ENCODE measurements at regions of chr2 and their contacts with region 1.

Region 1: DNA sequence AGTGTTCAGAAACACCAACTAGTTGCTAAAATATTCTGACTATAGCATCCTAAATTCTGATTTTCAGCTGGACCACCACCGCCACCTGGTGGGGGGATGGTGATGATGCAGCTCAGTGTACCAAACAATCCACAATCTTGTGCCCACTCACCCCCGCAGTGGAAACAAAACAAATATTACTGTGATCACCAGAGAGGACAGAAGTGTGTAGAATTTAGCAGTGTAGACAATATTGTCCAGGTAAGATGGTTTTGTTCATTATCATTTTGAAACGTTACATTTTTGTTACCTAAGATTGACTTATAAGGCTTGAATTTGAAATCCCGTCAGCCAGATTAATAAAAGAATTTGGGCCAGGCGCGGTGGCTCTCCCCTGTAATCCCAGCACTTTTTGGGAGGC is 31.7 kb upstream of the UBXN4 start:
- DNase-seq: peak; percentile 49 to 87 (median 70)
- ATAC-seq: peak; percentile 86
- H3K4me3 ChIP-seq: no peak overlapping the region
- H3K4me3 Mint-ChIP-seq: no peak overlapping the region
- H3K27ac ChIP-seq: no peak overlapping the region
- H3K27ac Mint-ChIP-seq: no peak overlapping the region
- H3K4me1 ChIP-seq: no peaks in the 10 kb centered on the region
- H3K4me1 Mint-ChIP-seq: peaks cover 2% of the 10 kb centered on the region
- H3K27me3 ChIP-seq: no peaks in the 10 kb centered on the region
- H3K27me3 Mint-ChIP-seq: no peaks in the 10 kb centered on the region
- CTCF ChIP-seq: peak; percentile 98

Region 2: GRCh38 chr2:134988994-134989605 is 720.9 kb before region 1 on chr2:
- CTCF ChIA-PET with region 1: interaction called, 18 read pairs
- POLR2A ChIA-PET with region 1: no interaction called
- intact Hi-C with region 1: loop called (anchors 1 kb)
- DNase-seq: peak in 2 of 9 experiments; percentile 33 to 49
- ATAC-seq: peak; percentile 40
- H3K4me3 ChIP-seq: no peak overlapping the region
- H3K4me3 Mint-ChIP-seq: no peak overlapping the region
- H3K27ac ChIP-seq: no peak overlapping the region
- H3K27ac Mint-ChIP-seq: no peak overlapping the region
- H3K4me1 ChIP-seq: no peaks in the 10 kb centered on the region
- H3K4me1 Mint-ChIP-seq: peaks cover 3% of the 10 kb centered on the region
- H3K27me3 ChIP-seq: peaks cover 0 to 2% of the 10 kb centered on the region in 2 experiments
- H3K27me3 Mint-ChIP-seq: peaks cover 7% of the 10 kb centered on the region
- CTCF ChIP-seq: peak; percentile 40

Region 3: DNA sequence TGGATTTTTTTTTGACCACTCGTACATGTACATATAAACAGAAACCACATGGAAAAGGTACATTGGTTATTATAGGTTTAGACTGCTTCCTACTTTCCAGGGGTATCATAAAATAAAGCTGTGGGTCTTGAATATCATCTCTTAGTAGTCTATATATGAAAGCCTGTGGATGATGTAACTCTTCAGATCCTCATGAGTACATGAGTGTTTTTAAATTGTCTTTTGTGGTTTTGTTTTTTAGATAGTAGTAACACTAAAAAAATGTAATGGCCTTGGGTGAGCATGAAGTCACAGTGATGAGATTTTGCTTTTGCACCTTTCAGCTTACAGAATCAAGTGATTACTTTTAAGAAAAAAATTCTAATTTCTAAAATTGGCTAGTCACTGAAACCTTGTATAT is 577.7 kb before region 1 on chr2:
- CTCF ChIA-PET with region 1: interaction called, 3 read pairs
- POLR2A ChIA-PET with region 1: no interaction called
- intact Hi-C with region 1: loop called in 1 of 2 experiments (anchors 10 kb)
- DNase-seq: no peak
- ATAC-seq: no peak
- H3K4me3 ChIP-seq: no peak overlapping the region
- H3K4me3 Mint-ChIP-seq: no peak overlapping the region
- H3K27ac ChIP-seq: no peak overlapping the region
- H3K27ac Mint-ChIP-seq: no peak overlapping the region
- H3K4me1 ChIP-seq: no peaks in the 10 kb centered on the region
- H3K4me1 Mint-ChIP-seq: peaks cover 6% of the 10 kb centered on the region
- H3K27me3 ChIP-seq: no peaks in the 10 kb centered on the region
- H3K27me3 Mint-ChIP-seq: no peaks in the 10 kb centered on the region
- CTCF ChIP-seq: no peak

Region 4: DNA sequence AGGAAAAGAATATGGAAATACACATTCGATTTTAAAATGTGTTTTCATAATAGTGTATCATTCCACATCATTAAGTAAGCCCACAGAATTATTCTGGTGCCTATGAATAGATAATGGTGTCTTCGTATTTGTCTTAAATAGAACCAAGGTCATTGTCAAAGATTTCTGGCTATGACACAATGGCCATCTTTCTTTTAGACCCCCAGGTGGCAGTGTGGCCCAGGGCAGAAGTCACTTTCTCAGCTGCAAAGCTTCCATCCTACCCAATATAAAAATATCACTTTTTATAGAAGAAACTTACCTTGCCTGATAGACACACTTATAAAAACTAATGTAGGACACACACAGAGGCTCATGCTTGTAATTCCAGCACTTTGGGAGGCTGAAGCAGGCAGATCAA is 236.4 kb before region 1 on chr2:
- CTCF ChIA-PET with region 1: interaction called, 59 read pairs
- POLR2A ChIA-PET with region 1: no interaction called
- intact Hi-C with region 1: loop called (anchors 1 kb)
- DNase-seq: peak in 6 of 9 experiments; percentile 4 to 57 (median 32)
- ATAC-seq: peak; percentile 38
- H3K4me3 ChIP-seq: no peak overlapping the region
- H3K4me3 Mint-ChIP-seq: no peak overlapping the region
- H3K27ac ChIP-seq: no peak overlapping the region
- H3K27ac Mint-ChIP-seq: no peak overlapping the region
- H3K4me1 ChIP-seq: no peaks in the 10 kb centered on the region
- H3K4me1 Mint-ChIP-seq: no peaks in the 10 kb centered on the region
- H3K27me3 ChIP-seq: no peaks in the 10 kb centered on the region
- H3K27me3 Mint-ChIP-seq: no peaks in the 10 kb centered on the region
- CTCF ChIP-seq: peak; percentile 15

Region 5: GRCh38 chr2:135573620-135574019 is 136.4 kb before region 1 on chr2:
- CTCF ChIA-PET with region 1: interaction called, 12 read pairs
- POLR2A ChIA-PET with region 1: no interaction called
- intact Hi-C with region 1: loop called in 1 of 2 experiments (anchors 1 kb)
- DNase-seq: no peak
- ATAC-seq: no peak
- H3K4me3 ChIP-seq: no peak overlapping the region
- H3K4me3 Mint-ChIP-seq: no peak overlapping the region
- H3K27ac ChIP-seq: no peak overlapping the region
- H3K27ac Mint-ChIP-seq: no peak overlapping the region
- H3K4me1 ChIP-seq: no peaks in the 10 kb centered on the region
- H3K4me1 Mint-ChIP-seq: no peaks in the 10 kb centered on the region
- H3K27me3 ChIP-seq: no peaks in the 10 kb centered on the region
- H3K27me3 Mint-ChIP-seq: no peaks in the 10 kb centered on the region
- CTCF ChIP-seq: no peak

Region 6: GRCh38 chr2:135650721-135651120 is 59.3 kb before region 1 on chr2:
- CTCF ChIA-PET with region 1: interaction called, 8 read pairs
- POLR2A ChIA-PET with region 1: no interaction called
- intact Hi-C with region 1: loop called in 1 of 2 experiments (anchors 5 kb)
- DNase-seq: no peak
- ATAC-seq: no peak
- H3K4me3 ChIP-seq: no peak overlapping the region
- H3K4me3 Mint-ChIP-seq: no peak overlapping the region
- H3K27ac ChIP-seq: no peak overlapping the region
- H3K27ac Mint-ChIP-seq: no peak overlapping the region
- H3K4me1 ChIP-seq: peaks cover 7% of the 10 kb centered on the region
- H3K4me1 Mint-ChIP-seq: peaks cover 20% of the 10 kb centered on the region
- H3K27me3 ChIP-seq: no peaks in the 10 kb centered on the region
- H3K27me3 Mint-ChIP-seq: no peaks in the 10 kb centered on the region
- CTCF ChIP-seq: no peak